ENCODE measurements at regions of chr5 and their contacts with region 1.

Region 1: DNA sequence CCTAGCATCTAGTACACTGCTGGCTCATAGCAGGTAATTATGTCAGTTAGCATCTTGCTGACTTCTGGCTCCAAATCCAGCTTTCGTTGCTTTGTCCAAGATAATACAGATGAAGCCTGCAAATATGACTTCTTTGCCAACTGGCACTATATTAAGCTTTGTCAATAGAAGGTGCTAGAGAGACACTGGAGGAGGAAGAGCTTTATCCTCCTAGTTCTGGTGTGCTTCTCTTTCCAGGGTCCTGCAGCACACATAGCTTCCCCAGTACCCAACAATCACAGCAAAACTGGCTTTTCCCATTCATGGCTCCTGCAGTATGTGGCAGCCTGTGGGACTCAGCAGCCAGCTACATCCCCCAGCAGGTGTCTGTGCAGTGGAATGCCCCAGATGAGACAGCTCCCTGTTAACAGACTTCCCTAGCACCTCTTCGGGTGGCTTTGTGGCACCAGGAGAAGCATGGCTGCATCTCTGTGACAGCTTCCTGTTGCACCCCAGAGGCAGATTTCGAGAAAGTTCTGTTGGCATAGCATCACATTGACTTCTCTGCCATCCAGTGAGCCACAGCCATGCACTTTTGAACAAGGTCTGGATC is 147.8 kb downstream of the OXCT1 start:
- DNase-seq: peak in 1 of 9 experiments; percentile 16
- ATAC-seq: no peak
- H3K4me3 ChIP-seq: no peak overlapping the region
- H3K4me3 Mint-ChIP-seq: no peak overlapping the region
- H3K27ac ChIP-seq: no peak overlapping the region
- H3K27ac Mint-ChIP-seq: no peak overlapping the region
- H3K4me1 ChIP-seq: no peaks in the 10 kb centered on the region
- H3K4me1 Mint-ChIP-seq: no peaks in the 10 kb centered on the region
- H3K27me3 ChIP-seq: no peaks in the 10 kb centered on the region
- H3K27me3 Mint-ChIP-seq: no peaks in the 10 kb centered on the region
- CTCF ChIP-seq: no peak

Region 2: DNA sequence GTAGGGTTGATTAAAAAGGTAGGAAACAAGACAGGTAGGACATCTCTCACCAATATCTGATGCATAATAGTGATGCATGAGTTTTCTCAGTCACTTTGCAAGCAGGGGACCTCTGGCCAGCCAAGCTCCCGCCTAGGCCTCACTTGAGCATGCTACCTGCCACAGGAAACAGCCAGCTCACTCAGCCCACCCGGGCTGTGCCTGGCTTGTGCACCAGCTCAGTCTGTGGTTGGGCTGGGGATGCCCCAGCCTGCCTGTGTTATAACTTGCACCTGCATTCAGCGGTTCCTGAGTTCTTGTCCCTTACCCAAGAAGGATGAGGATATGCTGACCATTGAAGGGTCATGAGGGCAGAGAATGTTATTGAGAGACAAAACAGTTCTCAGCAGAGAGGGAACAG is 39.3 kb before region 1 on chr5:
- CTCF ChIA-PET with region 1: no interaction called
- POLR2A ChIA-PET with region 1: no interaction called
- intact Hi-C with region 1: loop called in 1 of 2 experiments (anchors 1 kb)
- DNase-seq: no peak
- ATAC-seq: no peak
- H3K4me3 ChIP-seq: no peak overlapping the region
- H3K4me3 Mint-ChIP-seq: no peak overlapping the region
- H3K27ac ChIP-seq: no peak overlapping the region
- H3K27ac Mint-ChIP-seq: no peak overlapping the region
- H3K4me1 ChIP-seq: no peaks in the 10 kb centered on the region
- H3K4me1 Mint-ChIP-seq: no peaks in the 10 kb centered on the region
- H3K27me3 ChIP-seq: no peaks in the 10 kb centered on the region
- H3K27me3 Mint-ChIP-seq: peaks cover 2% of the 10 kb centered on the region
- CTCF ChIP-seq: no peak